Right ventricle myocardium superior (tissue), 1 donor: ENCODE measurements at regions of chr1 and their contacts with region 1.

Region 1: GRCh38 chr1:234065794-234066447 is 161.4 kb downstream of the SLC35F3 start:
- DNase-seq: peak; percentile 88
- ATAC-seq: peak; percentile 73

Region 2: GRCh38 chr1:233394860-233395717 is 670.8 kb before region 1 on chr1:
- intact Hi-C with region 1: loop called (anchors 5 kb)
- DNase-seq: no peak
- ATAC-seq: peak; percentile 85

Region 3: DNA sequence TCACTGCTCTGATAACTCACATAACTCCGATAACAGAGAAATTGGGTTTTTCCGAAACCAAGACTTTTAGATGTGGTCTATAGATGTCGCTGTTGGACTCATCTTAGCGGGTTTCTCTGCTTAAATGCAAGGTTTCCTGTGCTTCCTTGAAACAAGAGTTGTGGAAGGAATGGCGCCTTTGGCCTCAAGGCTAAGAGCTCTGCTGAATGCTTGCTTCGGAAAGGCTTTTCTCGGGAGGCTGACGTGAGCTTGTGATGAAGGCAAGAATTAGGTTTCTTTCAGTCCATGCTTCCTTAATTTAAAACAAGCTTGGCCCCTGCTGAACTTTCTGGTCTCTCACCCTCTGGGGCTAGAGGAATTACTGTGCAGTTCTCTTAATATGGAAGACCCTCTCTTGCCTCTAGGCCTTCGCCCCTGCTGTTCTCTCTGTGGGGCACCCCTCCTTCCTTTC is 624.9 kb before region 1 on chr1:
- intact Hi-C with region 1: loop called (anchors 5 kb)
- DNase-seq: no peak
- ATAC-seq: peak; percentile 66